ENCODE measurements at regions of chr3 and their contacts with region 1.

Region 1: GRCh38 chr3:190384241-190384863 is 3.6 kb upstream of the CLDN16 start:
- DNase-seq: peak; percentile 90
- H3K4me3 ChIP-seq: no peak overlapping the region
- H3K27ac ChIP-seq: peak overlapping the region; percentile 28
- H3K4me1 ChIP-seq: peaks cover 52% of the 10 kb centered on the region
- H3K27me3 ChIP-seq: no peaks in the 10 kb centered on the region
- CTCF ChIP-seq: peak; percentile 90 to 98

Region 2: DNA sequence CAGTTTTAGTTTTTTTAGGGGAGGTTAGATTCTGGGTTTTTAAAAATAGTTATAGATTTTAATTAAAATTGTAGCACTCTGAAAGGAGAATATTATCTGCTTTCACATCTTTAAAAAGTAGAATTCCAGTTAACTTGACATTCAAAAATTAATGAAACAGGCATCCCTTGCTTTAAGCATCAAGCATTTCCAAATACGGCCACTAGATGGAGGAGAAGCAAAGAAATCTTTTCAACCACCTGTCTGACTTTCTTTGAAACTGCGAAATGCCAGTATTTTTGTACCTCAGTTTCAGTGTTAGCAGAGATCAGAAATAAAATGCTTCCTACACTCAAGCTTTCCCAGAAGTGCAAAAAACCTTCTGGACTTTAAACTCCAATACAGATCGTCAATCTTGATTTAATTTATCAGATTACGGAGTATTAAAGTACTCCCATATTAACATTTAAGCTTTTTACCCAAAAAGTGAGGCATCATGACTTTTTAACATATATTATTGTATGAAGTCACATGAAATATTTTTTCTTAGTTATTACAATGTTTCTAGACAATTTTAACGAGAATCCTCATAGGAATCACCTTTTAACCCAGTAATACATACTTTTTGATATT is 417.0 kb before region 1 on chr3:
- CTCF ChIA-PET with region 1: no interaction called
- dilution Hi-C with region 1: loop called (anchors 5 kb)
- in situ Hi-C with region 1: no loop called
- intact Hi-C with region 1: loop called (anchors 1 kb)
- DNase-seq: peak; percentile 41
- H3K4me3 ChIP-seq: no peak overlapping the region
- H3K27ac ChIP-seq: no peak overlapping the region
- H3K4me1 ChIP-seq: peaks cover 6% of the 10 kb centered on the region
- H3K27me3 ChIP-seq: no peaks in the 10 kb centered on the region
- CTCF ChIP-seq: peak; percentile 69 to 90

Region 3: DNA sequence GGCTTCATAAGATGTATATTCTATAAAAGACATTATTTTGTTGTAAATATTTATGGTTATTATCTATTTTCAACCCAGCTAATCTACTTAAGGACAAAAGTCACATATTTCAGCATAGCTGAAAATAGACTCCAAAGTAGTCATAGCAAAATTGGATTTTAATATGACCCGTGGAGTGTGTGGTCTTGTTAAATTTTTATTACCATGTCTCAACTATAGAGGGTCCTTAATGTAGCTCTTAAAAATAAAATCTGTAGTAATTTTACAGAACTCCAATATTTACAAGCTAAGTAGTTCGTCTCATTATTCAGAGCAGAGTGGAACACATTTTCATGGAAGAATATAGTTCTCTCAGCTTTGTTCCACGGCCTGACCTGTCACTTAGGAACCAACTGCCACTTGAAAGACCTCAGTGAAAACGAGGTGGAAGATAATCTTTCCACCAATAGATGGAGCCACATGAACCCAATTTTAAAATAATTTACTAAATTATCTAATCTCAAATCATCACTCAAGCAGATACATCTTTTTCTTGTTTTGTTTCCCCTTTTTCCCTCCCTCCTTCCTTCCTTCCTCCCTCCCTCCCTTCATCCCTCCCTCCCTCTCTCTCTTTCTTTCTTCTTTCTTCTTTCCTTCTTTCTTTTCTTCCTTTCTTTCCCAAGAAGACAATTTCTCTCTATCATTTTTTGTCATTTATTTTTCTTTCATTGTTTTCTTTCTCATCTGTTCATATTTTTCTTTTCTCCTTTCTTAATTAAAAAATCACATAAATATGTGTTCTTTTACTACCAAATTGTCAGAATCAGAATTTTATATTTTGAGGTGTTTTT is 159.3 kb before region 1 on chr3:
- CTCF ChIA-PET with region 1: interaction called, 6 read pairs
- dilution Hi-C with region 1: no loop called
- in situ Hi-C with region 1: loop called (anchors 5 to 10 kb)
- intact Hi-C with region 1: loop called (anchors 1 kb)
- DNase-seq: peak; percentile 48
- H3K4me3 ChIP-seq: no peak overlapping the region
- H3K27ac ChIP-seq: no peak overlapping the region
- H3K4me1 ChIP-seq: peaks cover 5% of the 10 kb centered on the region
- H3K27me3 ChIP-seq: no peaks in the 10 kb centered on the region
- CTCF ChIP-seq: peak; percentile 53 to 59

Region 4: DNA sequence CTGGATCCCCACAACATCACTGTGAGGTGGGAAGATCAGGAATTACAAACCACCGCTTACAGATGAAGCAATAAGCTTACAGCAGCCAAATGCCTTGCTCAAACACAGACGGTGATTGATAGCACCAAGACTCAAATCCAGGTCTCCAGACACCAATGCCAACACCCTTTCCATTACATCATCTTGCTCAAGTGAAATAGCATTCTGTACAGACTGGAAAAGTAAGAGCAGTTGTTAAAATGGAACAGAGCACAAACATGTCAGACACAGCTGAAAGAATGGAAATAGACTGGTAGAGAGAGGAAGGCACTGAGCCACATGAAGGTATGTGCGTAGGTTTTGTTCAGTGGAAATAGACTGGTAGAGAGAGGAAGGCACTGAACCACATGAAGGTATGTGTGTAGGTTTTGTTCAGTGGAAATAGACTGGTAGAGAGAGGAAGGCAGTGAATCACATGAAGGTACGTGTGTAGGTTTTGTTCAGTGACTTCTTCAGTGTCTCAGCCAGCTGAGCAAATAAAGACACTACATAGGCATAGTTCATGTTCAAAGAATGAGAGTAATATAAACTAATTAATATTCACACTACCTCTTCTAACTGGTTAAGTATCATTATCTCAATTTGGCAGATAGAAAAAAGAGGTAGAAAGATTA is 77.7 kb before region 1 on chr3:
- CTCF ChIA-PET with region 1: no interaction called
- dilution Hi-C with region 1: no loop called
- in situ Hi-C with region 1: no loop called
- intact Hi-C with region 1: no loop called
- DNase-seq: peak; percentile 86
- H3K4me3 ChIP-seq: no peak overlapping the region
- H3K27ac ChIP-seq: no peak overlapping the region
- H3K4me1 ChIP-seq: peaks cover 37% of the 10 kb centered on the region
- H3K27me3 ChIP-seq: no peaks in the 10 kb centered on the region
- CTCF ChIP-seq: no peak

Region 5: GRCh38 chr3:190345027-190345821 is 39.1 kb before region 1 on chr3:
- CTCF ChIA-PET with region 1: no interaction called
- dilution Hi-C with region 1: no loop called
- in situ Hi-C with region 1: no loop called
- intact Hi-C with region 1: loop called (anchors 1 kb)
- DNase-seq: peak; percentile 100
- H3K4me3 ChIP-seq: peak overlapping the region in 2 of 3 experiments; percentile 6 to 25
- H3K27ac ChIP-seq: peak overlapping the region; percentile 100
- H3K4me1 ChIP-seq: peaks cover 23% of the 10 kb centered on the region
- H3K27me3 ChIP-seq: no peaks in the 10 kb centered on the region
- CTCF ChIP-seq: no peak

Region 6: DNA sequence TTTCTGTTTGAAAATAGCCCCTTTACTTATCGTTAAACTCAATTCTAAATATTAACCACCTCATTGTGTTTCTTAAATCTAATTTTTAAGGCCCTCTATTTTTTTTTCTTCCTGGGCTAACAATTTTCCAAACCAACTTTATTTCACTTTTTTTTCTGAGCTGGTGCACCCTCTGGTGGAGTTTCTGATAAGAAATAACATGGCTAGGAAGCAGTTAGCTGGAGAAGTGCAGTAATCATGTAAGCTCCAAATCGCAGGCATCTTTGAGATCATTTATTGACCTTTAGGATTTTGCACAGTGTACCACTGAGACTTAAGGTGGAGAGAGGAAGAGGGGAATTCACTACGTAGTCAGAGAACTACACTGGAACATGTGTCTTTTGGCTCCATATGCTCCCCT is 58.9 kb after region 1 on chr3:
- CTCF ChIA-PET with region 1: interaction called, 9 read pairs
- dilution Hi-C with region 1: no loop called
- in situ Hi-C with region 1: no loop called
- intact Hi-C with region 1: loop called (anchors 1 kb)
- DNase-seq: no peak
- H3K4me3 ChIP-seq: no peak overlapping the region
- H3K27ac ChIP-seq: no peak overlapping the region
- H3K4me1 ChIP-seq: no peaks in the 10 kb centered on the region
- H3K27me3 ChIP-seq: no peaks in the 10 kb centered on the region
- CTCF ChIP-seq: peak; percentile 26 to 45

Region 7: GRCh38 chr3:190481779-190482178 is 97.4 kb after region 1 on chr3:
- CTCF ChIA-PET with region 1: no interaction called
- dilution Hi-C with region 1: no loop called
- in situ Hi-C with region 1: no loop called
- intact Hi-C with region 1: no loop called
- DNase-seq: no peak
- H3K4me3 ChIP-seq: no peak overlapping the region
- H3K27ac ChIP-seq: no peak overlapping the region
- H3K4me1 ChIP-seq: peaks cover 7% of the 10 kb centered on the region
- H3K27me3 ChIP-seq: no peaks in the 10 kb centered on the region
- CTCF ChIP-seq: no peak

Region 8: DNA sequence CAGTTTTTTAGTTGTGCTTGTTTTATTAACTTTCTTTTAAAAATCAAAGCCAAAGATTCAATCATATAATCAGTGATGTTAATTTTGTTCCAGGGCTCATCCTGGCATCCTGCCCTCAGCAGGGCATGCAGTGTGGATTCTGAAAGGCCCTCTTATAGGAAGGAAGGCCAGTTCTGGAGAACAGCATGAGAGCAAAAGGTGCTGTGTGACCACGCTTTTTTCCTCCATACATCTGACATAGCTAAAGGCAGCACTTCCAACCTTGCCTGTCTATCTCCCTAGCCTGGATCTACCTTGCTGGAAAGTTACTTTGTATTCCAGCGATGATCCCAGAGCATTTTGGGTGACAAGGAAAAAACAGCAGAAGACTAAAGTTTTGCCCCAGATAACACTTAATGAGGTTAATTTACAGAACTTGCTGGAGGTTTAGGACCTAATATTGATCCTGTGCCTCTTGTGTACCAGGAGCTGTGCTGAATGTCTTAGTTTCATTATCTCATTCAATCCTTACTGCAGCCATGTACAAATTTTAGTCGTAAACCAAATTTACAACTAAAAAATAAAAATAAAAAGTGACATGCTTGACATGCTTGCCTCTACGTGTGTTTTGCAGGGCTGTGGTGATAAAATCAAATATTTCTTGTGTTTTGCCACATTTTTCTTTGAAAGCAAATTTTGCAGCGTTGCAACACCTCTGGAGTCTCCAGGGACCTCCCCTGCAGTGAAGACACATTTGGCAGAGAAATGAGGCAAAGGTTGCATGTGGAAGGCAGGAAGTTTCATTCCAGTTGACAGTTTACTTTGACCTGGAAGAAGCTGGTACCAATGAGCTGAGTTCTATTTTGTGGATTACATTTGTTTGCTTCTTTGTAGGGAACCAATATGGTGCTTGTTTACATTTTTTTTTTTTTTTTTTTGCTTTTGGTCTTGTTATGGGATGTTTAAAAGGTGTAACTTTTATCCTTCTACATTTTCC is 142.7 kb after region 1 on chr3:
- CTCF ChIA-PET with region 1: no interaction called
- dilution Hi-C with region 1: no loop called
- in situ Hi-C with region 1: no loop called
- intact Hi-C with region 1: no loop called
- DNase-seq: no peak
- H3K4me3 ChIP-seq: no peak overlapping the region
- H3K27ac ChIP-seq: peak overlapping the region; percentile 37
- H3K4me1 ChIP-seq: peaks cover 44% of the 10 kb centered on the region
- H3K27me3 ChIP-seq: no peaks in the 10 kb centered on the region
- CTCF ChIP-seq: no peak